GM18951 (cell line): ENCODE measurements at regions of chr2 and their contacts with region 1.

Region 1: GRCh38 chr2:164061129-164061746 is 325.4 kb upstream of the FIGN start:
- POLR2A ChIP-seq: no peak

Region 2: GRCh38 chr2:163191372-163191771 is 869.9 kb before region 1 on chr2:
- in situ Hi-C with region 1: loop called (anchors 25 kb)
- POLR2A ChIP-seq: no peak

Region 3: GRCh38 chr2:163345908-163346573 is 715.2 kb before region 1 on chr2:
- in situ Hi-C with region 1: loop called (anchors 25 kb)
- POLR2A ChIP-seq: no peak

Region 4: DNA sequence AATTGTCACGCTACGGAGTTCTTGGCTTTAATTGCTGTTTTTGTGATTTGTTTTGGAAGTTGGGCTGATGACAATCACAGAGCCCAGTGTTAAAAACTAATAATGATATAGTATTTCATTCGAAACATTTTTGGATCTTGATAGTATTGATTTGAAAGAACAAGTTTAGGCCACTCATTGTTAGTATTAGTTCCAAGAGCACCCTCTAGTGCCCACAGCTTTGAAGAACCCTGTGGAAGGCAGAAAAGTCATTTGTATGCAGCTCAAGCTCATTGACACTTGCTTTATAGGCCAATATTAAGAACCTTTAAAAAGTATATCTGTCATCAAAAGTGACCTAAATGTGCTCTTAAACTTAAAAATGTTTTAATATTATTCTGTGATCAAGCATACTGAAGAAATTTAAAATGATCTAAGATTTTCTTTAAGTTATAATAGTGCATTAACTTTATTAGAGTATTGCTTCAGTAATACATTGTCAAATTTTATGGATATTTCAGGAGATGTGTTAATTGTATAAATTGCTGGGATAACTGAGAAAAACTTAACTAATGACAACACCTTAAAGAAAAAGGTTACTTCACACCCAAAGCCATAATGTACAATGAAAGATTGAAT is 369.0 kb after region 1 on chr2:
- in situ Hi-C with region 1: no loop called
- POLR2A ChIP-seq: no peak